AG04450 (cell line): ENCODE measurements at regions of chr3 and their contacts with region 1.

Region 1: GRCh38 chr3:15268033-15268631 is 62.1 kb downstream of the CAPN7 start:
- DNase-seq: peak; percentile 61
- H3K4me3 ChIP-seq: no peak overlapping the region
- H3K27ac ChIP-seq: no peak overlapping the region
- H3K27me3 ChIP-seq: no peaks in the 10 kb centered on the region
- CTCF ChIP-seq: peak; percentile 97

Region 2: DNA sequence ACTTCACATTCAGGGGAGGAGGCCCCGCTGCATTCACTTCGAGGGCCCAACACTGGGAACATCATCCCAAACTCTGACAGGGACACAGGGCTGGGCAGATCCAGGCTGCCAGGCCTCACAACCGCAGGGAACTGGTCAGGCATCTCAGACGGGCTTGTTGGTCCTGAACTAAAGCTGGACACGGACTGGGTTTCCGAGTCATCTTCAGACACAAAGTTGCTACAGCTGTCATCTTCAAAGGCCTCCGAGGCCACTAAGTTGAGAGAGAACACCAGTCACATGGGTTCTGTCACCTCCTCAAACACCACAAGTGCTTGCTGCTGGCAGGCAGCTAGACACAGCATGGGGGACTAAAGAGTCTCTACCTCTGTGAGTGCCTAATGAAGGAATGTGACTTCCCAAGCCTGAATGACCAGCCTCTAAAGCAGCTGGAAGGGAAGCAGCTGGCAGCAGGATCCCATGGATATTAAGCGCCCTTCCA is 11.2 kb before region 1 on chr3:
- CTCF ChIA-PET with region 1: interaction called, 34 read pairs
- POLR2A ChIA-PET with region 1: no interaction called
- DNase-seq: no peak
- H3K4me3 ChIP-seq: no peak overlapping the region
- H3K27ac ChIP-seq: no peak overlapping the region
- H3K27me3 ChIP-seq: no peaks in the 10 kb centered on the region
- CTCF ChIP-seq: no peak

Region 3: GRCh38 chr3:15319575-15319974 is 51.4 kb after region 1 on chr3:
- CTCF ChIA-PET with region 1: interaction called, 15 read pairs
- POLR2A ChIA-PET with region 1: no interaction called
- DNase-seq: no peak
- H3K4me3 ChIP-seq: no peak overlapping the region
- H3K27ac ChIP-seq: no peak overlapping the region
- H3K27me3 ChIP-seq: no peaks in the 10 kb centered on the region
- CTCF ChIP-seq: no peak

Region 4: GRCh38 chr3:15367059-15367458 is 98.9 kb after region 1 on chr3:
- CTCF ChIA-PET with region 1: interaction called, 15 read pairs
- POLR2A ChIA-PET with region 1: no interaction called
- DNase-seq: no peak
- H3K4me3 ChIP-seq: no peak overlapping the region
- H3K27ac ChIP-seq: no peak overlapping the region
- H3K27me3 ChIP-seq: peaks cover 3% of the 10 kb centered on the region
- CTCF ChIP-seq: no peak

Region 5: DNA sequence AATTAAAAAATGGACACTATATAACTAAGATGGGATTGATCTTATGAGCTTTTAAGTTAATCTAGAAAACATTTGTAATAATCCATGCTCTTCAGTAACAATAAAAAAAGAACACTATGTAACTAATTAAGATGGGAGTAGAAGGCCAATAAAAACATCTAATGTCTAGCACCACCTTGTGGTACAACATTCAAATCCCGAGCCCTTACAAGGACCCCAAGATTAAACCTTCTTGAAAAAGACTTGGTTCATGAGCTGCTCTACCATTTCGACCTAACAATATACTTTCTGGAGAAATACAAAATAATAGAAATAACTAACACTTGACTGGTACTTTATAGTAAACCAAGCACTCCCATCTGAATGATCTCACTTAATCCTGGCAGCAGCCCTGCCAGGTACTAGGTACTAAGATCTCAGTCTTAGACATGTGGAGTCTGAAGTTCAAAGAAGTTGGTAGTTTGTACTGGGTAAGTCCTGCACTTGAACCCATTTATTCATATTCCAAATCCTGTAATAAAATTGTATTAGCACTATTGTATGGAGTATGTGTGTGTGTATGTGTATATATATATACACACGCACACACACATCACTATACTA is 137.4 kb after region 1 on chr3:
- CTCF ChIA-PET with region 1: interaction called, 247 read pairs
- POLR2A ChIA-PET with region 1: interaction called, 6 read pairs
- DNase-seq: peak; percentile 23
- H3K4me3 ChIP-seq: no peak overlapping the region
- H3K27ac ChIP-seq: no peak overlapping the region
- H3K27me3 ChIP-seq: no peaks in the 10 kb centered on the region
- CTCF ChIP-seq: peak; percentile 68

Region 6: GRCh38 chr3:15722877-15723620 is 454.9 kb after region 1 on chr3:
- CTCF ChIA-PET with region 1: no interaction called
- POLR2A ChIA-PET with region 1: no interaction called
- DNase-seq: no peak
- H3K4me3 ChIP-seq: no peak overlapping the region
- H3K27ac ChIP-seq: no peak overlapping the region
- H3K27me3 ChIP-seq: no peaks in the 10 kb centered on the region
- CTCF ChIP-seq: no peak